Esophagus muscularis mucosa (tissue), 4 donors: ENCODE measurements at regions of chr2 and their contacts with region 1.

Region 1: GRCh38 chr2:207746131-207746530 is 23.6 kb downstream of the FZD5 start:
- DNase-seq: no peak
- H3K4me3 ChIP-seq: no peak overlapping the region
- H3K27ac ChIP-seq: no peak overlapping the region
- H3K4me1 ChIP-seq: no peaks in the 10 kb centered on the region
- H3K27me3 ChIP-seq: no peaks in the 10 kb centered on the region
- CTCF ChIP-seq: peak; percentile 83 to 87 (median 85)
- EP300 ChIP-seq: no peak
- POLR2A ChIP-seq: no peak

Region 2: GRCh38 chr2:207974216-207974605 is 228.1 kb after region 1 on chr2:
- intact Hi-C with region 1: loop called (anchors 5 kb)
- DNase-seq: no peak
- H3K4me3 ChIP-seq: no peak overlapping the region
- H3K27ac ChIP-seq: no peak overlapping the region
- H3K4me1 ChIP-seq: peaks cover 4 to 19% (median 14%) of the 10 kb centered on the region in 4 donors
- H3K27me3 ChIP-seq: no peaks in the 10 kb centered on the region
- CTCF ChIP-seq: no peak
- EP300 ChIP-seq: no peak
- POLR2A ChIP-seq: no peak

Region 3: DNA sequence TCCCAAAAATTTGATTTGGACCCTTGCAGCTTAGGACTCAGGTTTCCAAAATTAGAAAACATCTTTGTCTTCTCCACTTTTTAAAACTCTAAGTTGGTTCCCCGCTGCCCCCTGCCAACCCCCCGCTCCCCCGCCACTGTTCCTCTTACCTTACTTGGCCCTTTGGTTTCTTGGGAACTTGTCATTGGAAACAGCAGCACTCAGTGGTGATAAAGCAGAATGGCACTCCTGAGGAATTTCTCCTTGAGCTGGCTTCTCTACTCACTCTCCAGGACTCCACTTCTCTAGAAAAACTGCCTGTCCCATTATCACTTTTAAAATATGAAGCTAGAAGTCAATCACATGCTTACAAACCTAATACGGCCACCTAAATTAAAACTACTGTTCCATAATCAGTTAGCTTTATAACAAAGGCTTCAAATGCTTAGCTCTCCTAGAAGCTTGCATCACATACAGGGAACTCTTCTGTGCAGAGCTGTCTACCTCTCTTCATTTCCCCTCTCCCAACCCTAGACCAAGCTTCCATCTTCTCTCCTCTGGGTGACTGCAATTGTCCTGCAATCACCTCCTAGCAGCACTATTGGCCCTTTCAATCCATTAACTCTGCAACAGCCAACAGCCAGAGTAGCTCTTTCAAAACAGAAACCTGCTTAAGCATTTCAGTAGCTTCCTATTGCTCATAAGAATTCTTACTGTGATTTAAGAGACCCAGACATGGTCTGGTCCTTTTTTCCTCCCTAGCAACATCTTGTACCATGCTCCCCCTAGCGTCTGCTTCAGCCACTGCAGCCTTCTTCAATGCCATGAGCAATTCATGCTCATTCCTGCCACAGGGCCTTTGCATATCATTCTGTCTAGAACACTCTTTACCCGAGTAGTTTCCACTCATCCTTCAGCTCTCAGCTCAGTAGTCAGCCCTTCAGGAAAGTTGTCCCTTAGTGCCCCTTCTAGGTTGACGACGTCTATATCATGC is 294.4 kb after region 1 on chr2:
- intact Hi-C with region 1: loop called (anchors 5 kb)
- DNase-seq: no peak
- H3K4me3 ChIP-seq: no peak overlapping the region
- H3K27ac ChIP-seq: no peak overlapping the region
- H3K4me1 ChIP-seq: no peaks in the 10 kb centered on the region
- H3K27me3 ChIP-seq: no peaks in the 10 kb centered on the region
- CTCF ChIP-seq: peak; percentile 61 to 69 (median 62)
- EP300 ChIP-seq: no peak
- POLR2A ChIP-seq: no peak

Region 4: GRCh38 chr2:208072250-208072892 is 326.2 kb after region 1 on chr2:
- intact Hi-C with region 1: loop called (anchors 2 kb)
- DNase-seq: no peak
- H3K4me3 ChIP-seq: no peak overlapping the region
- H3K27ac ChIP-seq: no peak overlapping the region
- H3K4me1 ChIP-seq: no peaks in the 10 kb centered on the region
- H3K27me3 ChIP-seq: peaks cover 0 to 9% (median 0%) of the 10 kb centered on the region in 4 donors
- CTCF ChIP-seq: peak; percentile 59 to 85 (median 69)
- EP300 ChIP-seq: no peak
- POLR2A ChIP-seq: no peak